ENCODE measurements at regions of chr7 and their contacts with region 1.

Region 1: DNA sequence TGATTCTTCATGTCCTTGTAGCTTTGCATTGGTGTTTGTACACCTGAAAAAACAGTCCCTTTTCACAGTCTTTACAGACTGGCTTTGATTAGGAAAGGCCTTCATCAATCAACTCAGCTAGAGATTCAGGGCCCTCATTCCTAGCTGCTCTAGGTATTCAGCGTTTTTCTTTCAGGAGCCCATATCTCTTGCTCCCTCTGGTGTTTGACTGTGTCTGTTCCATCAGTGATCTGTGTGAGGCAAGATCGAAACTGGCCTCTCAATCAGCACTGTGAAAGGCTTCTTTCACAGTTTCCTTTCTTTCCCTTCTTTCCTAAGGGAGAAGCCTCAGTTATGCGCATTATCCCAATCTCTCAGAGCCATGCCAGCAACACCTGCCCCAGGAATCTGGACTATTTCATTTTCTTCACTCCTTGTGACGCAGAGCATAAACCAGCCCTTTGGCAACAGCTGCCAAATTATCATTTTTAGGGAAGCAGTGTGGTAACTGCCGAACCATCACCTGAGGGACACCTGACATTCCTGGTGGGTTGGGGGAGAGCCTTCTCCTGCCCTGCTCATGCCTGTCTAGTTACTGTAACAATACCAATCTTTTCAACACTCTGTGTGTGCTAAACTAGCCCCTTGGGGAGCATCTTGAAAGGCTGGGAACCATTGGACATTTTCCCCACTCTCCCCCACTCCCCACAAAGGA is 75.7 kb upstream of the CCDC71L start:
- DNase-seq: peak; percentile 84
- H3K4me3 Mint-ChIP-seq: peak overlapping the region; percentile 57
- H3K27ac Mint-ChIP-seq: peak overlapping the region; percentile 86
- H3K4me1 Mint-ChIP-seq: peaks cover 9% of the 10 kb centered on the region
- H3K27me3 Mint-ChIP-seq: no peaks in the 10 kb centered on the region
- CTCF ChIP-seq: peak; percentile 72

Region 2: DNA sequence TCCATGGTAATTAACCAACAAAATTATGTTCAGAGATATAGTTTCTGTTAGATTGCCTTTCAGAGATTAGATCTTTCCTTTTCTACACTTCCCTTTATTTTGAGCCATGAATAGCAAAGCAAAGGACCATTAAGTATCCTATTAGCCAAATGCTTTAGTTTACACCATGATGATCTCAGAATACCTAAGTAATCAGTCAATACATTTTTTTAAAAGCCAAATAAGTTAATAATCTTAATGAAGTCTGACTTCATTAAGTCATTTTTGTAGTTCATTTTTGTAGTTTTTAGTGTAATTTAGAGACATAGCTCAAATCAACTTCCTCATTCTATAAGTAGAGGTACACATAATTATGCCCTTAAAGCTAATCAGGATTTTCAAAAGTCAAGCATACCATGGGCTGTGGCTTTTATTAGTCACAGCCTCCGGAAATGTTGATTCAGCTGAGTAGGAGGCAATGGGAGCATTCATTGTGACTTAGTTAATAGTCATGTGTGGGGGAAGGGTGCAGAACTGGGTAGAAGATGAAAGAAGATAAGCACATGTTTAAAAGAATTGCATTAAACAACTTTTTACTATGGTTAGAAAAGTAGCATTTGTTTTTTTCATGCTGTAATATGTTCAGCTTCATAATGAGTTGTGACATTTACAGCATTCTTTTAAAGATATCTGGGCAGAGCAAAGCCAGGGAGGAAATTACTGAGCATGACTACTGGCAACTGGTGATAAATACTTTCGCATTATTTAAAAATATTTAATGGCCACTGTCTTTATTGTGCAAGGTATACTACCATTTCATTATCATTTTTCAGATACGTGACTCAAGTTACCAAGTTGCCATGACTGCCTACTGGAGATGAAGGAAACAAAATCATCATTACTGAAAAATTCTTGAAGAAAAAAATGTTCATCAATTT is 18.4 kb before region 1 on chr7:
- CTCF ChIA-PET with region 1: interaction called, 20 read pairs
- POLR2A ChIA-PET with region 1: interaction called, 3 read pairs
- intact Hi-C with region 1: no loop called
- DNase-seq: peak; percentile 93
- H3K4me3 Mint-ChIP-seq: no peak overlapping the region
- H3K27ac Mint-ChIP-seq: no peak overlapping the region
- H3K4me1 Mint-ChIP-seq: no peaks in the 10 kb centered on the region
- H3K27me3 Mint-ChIP-seq: no peaks in the 10 kb centered on the region
- CTCF ChIP-seq: no peak

Region 3: GRCh38 chr7:106757846-106758245 is 21.2 kb after region 1 on chr7:
- CTCF ChIA-PET with region 1: interaction called, 15 read pairs
- POLR2A ChIA-PET with region 1: interaction called, 3 read pairs
- intact Hi-C with region 1: no loop called
- DNase-seq: peak; percentile 44
- H3K4me3 Mint-ChIP-seq: no peak overlapping the region
- H3K27ac Mint-ChIP-seq: no peak overlapping the region
- H3K4me1 Mint-ChIP-seq: peaks cover 6% of the 10 kb centered on the region
- H3K27me3 Mint-ChIP-seq: no peaks in the 10 kb centered on the region
- CTCF ChIP-seq: no peak

Region 4: DNA sequence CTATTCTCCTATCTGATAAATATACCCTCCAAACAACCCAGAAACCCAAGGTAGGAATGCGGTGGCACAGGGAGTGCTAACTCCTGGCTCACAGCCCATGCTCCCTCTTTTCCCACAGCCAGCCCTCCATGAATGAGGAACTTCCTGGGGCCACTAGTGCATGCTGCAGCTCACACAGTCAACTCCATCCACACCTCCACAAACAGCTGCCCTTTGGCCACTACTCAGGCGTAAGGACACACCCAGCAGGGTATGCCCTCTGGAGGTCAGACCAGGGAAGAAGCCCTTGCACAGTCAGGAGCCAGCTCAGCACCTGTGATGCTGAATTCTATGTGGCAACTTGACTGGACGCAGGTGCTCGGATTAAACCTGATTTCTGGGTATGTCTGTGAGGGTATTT is 43.2 kb after region 1 on chr7:
- CTCF ChIA-PET with region 1: interaction called, 4 read pairs
- POLR2A ChIA-PET with region 1: no interaction called
- intact Hi-C with region 1: loop called (anchors 1 kb)
- DNase-seq: peak; percentile 35
- H3K4me3 Mint-ChIP-seq: no peak overlapping the region
- H3K27ac Mint-ChIP-seq: no peak overlapping the region
- H3K4me1 Mint-ChIP-seq: peaks cover 16% of the 10 kb centered on the region
- H3K27me3 Mint-ChIP-seq: no peaks in the 10 kb centered on the region
- CTCF ChIP-seq: no peak

Region 5: GRCh38 chr7:107147464-107148393 is 411.1 kb after region 1 on chr7:
- CTCF ChIA-PET with region 1: no interaction called
- POLR2A ChIA-PET with region 1: no interaction called
- intact Hi-C with region 1: no loop called
- DNase-seq: peak; percentile 62
- H3K4me3 Mint-ChIP-seq: no peak overlapping the region
- H3K27ac Mint-ChIP-seq: no peak overlapping the region
- H3K4me1 Mint-ChIP-seq: peaks cover 12% of the 10 kb centered on the region
- H3K27me3 Mint-ChIP-seq: no peaks in the 10 kb centered on the region
- CTCF ChIP-seq: peak; percentile 67